Ascending aorta (tissue), 2 donors: ENCODE measurements at regions of chr12 and their contacts with region 1.

Region 1: GRCh38 chr12:64625243-64626077 is 15.2 kb downstream of the RASSF3 start:
- DNase-seq: peak; percentile 49 to 87
- H3K4me3 ChIP-seq: peak overlapping the region; percentile 40 to 49
- H3K27ac ChIP-seq: peak overlapping the region; percentile 89 to 93
- H3K4me1 ChIP-seq: peaks cover 18 to 70% of the 10 kb centered on the region in 2 donors
- H3K27me3 ChIP-seq: no peaks in the 10 kb centered on the region
- CTCF ChIP-seq: no peak

Region 2: DNA sequence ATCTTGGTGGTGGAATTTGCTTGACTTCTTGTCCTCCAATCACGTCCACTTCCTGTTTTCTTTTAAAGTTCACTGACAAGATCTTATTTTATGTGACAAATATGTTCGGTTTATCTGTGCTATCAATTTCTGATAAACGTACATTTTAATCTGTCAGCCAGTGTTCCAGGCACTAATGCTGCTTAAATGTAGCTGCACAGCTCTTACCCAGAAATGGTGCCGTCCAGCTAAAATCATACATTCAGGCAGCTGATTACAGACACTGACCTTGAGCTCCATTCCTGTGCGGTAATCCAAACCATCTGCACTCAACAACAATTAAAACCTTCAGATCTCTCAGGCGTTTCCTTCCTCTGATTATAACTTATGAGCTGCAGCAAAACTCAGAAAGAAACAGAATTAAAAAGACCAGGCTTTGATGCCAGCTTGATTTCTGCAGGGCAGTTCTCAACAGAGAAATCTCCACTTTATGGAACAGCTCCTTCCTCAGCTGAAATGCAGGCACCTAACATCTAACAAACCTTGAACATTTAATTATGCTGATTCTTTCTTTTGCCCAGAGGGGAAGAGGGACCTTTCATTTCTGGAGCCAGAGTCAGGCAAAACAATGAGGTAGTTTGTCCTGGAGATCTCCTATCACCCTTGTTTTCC is 41.6 kb before region 1 on chr12:
- intact Hi-C with region 1: no loop called
- DNase-seq: no peak
- H3K4me3 ChIP-seq: peak overlapping the region; percentile 18 to 22
- H3K27ac ChIP-seq: no peak overlapping the region
- H3K4me1 ChIP-seq: peaks cover 0 to 9% of the 10 kb centered on the region in 2 donors
- H3K27me3 ChIP-seq: no peaks in the 10 kb centered on the region
- CTCF ChIP-seq: no peak

Region 3: DNA sequence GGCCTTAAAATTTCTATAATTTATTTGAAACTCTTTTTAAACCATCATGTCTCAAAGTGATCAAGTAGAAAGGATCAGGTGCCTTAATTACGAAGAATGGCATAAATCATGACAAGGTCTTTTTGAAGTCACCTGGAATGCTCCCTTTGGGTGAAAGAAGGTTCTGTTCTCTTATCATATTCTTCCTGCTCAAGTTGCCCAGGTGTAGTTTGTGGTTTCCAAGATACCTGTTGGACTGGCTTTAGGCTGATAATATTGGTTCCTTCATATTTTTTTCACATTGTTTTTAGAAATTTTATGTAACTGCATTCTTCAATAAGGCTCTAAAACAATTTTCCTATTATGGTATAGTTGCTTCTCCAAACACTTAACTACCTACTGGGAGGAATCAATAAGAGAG is 14.0 kb after region 1 on chr12:
- intact Hi-C with region 1: no loop called
- DNase-seq: no peak
- H3K4me3 ChIP-seq: no peak overlapping the region
- H3K27ac ChIP-seq: peak overlapping the region; percentile 18 to 78
- H3K4me1 ChIP-seq: peaks cover 4 to 32% of the 10 kb centered on the region in 2 donors
- H3K27me3 ChIP-seq: no peaks in the 10 kb centered on the region
- CTCF ChIP-seq: no peak

Region 4: GRCh38 chr12:64679487-64679983 is 54.1 kb after region 1 on chr12:
- intact Hi-C with region 1: loop called (anchors 2 kb)
- DNase-seq: peak; percentile 81 to 94
- H3K4me3 ChIP-seq: peak overlapping the region in 1 of 2 donors; percentile 44
- H3K27ac ChIP-seq: peak overlapping the region; percentile 93
- H3K4me1 ChIP-seq: peaks cover 25 to 72% of the 10 kb centered on the region in 2 donors
- H3K27me3 ChIP-seq: no peaks in the 10 kb centered on the region
- CTCF ChIP-seq: no peak